Heart left ventricle (tissue), 16 donors: ENCODE measurements at regions of chr9 and their contacts with region 1.

Region 1: GRCh38 chr9:33092634-33093033 is 16.2 kb upstream of the SMU1 start:
- DNase-seq: no peak
- ATAC-seq: no peak
- H3K4me3 ChIP-seq: no peak overlapping the region
- H3K27ac ChIP-seq: no peak overlapping the region
- H3K4me1 ChIP-seq: no peaks in the 10 kb centered on the region
- H3K27me3 ChIP-seq: no peaks in the 10 kb centered on the region
- CTCF ChIP-seq: no peak
- POLR2A ChIP-seq: no peak

Region 2: GRCh38 chr9:32968101-32969011 is 124.3 kb before region 1 on chr9:
- intact Hi-C with region 1: no loop called
- DNase-seq: peak in 2 of 5 donors; percentile 29 to 32
- ATAC-seq: peak in 1 of 4 donors; percentile 29
- H3K4me3 ChIP-seq: no peak overlapping the region
- H3K27ac ChIP-seq: no peak overlapping the region
- H3K4me1 ChIP-seq: peaks cover 0 to 10% (median 0%) of the 10 kb centered on the region in 12 donors
- H3K27me3 ChIP-seq: no peaks in the 10 kb centered on the region
- CTCF ChIP-seq: peak; percentile 80 to 94 (median 88)
- POLR2A ChIP-seq: no peak

Region 3: DNA sequence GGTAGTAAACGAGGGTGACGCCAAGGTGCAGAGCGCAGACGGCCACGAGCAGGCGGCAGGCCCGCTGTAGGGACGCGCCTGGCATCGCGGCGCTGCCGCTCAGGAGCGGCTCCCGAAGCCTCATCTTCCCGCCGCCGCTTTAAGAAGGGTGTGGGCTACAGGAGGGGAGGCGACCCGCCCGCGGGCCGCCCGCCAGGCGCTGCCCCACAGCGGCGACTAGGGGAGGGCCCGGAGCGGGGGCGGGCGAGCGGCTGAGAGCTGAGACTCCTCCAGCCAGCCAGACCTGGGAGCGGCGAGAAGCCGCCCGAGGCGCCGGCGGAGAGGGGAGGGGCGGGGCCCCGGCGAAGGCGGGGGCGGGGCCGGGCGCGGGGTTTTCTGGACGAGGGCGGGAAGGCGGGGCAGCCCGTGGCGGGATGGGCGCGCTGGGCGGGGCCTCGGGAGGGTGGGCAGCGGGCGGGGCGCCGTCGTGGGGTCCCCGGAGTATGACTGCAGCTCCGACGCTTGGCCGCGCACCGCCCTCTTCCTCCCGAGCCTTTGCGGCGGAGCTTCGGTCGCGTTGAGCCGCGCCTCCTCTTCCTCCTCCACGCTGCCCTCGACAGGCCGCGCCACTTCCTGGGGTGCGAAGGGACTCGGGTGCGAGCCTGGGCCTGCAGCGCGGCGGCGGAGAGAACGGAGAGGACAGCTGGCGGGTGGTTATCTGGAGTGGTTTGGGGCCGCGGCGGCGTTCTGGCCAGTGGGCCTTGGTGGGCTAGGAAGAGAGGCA is 74.6 kb after region 1 on chr9 and contains the start of gene B4GALT1:
- intact Hi-C with region 1: no loop called
- DNase-seq: peak; percentile 96 to 99 (median 97)
- ATAC-seq: peak; percentile 39 to 90 (median 71)
- H3K4me3 ChIP-seq: peak within 1 kb of the TSS; percentile 65 to 100 (median 91)
- H3K27ac ChIP-seq: peak within 1 kb of the TSS; percentile 96 to 100 (median 99)
- H3K4me1 ChIP-seq: peaks cover 13 to 63% (median 43%) of the 10 kb centered on the region in 12 donors
- H3K27me3 ChIP-seq: no peaks in the 10 kb centered on the region
- CTCF ChIP-seq: peak in 4 of 12 donors; percentile 12 to 35 (median 18)
- POLR2A ChIP-seq: peak; percentile 76 to 96
- total RNA-seq, gene B4GALT1: 27.4 to 73.3 (median 44.8) TPM

Region 4: GRCh38 chr9:33233681-33234473 is 141.2 kb after region 1 on chr9:
- intact Hi-C with region 1: loop called in 1 of 10 experiments (anchors 5 kb)
- DNase-seq: peak in 1 of 5 donors; percentile 33
- ATAC-seq: peak in 1 of 4 donors; percentile 35
- H3K4me3 ChIP-seq: no peak overlapping the region
- H3K27ac ChIP-seq: no peak overlapping the region
- H3K4me1 ChIP-seq: no peaks in the 10 kb centered on the region
- H3K27me3 ChIP-seq: no peaks in the 10 kb centered on the region
- CTCF ChIP-seq: no peak
- POLR2A ChIP-seq: no peak